Activated T-helper 1 cell treated with anti-CD3 and anti-CD28 coated beads, Interleukin-12 subunit alpha, Interleukin-12 subunit beta, Interleukin-2, Interleukin-4 antibody, amounts not matched to agents 30 ng/mL and 10 ng/mL and 1 ng/mL, durations not matched to agents 14 hours and 24 hours and 36 hours (primary cell): ENCODE measurements at regions of chr6 and their contacts with region 1.

Region 1: DNA sequence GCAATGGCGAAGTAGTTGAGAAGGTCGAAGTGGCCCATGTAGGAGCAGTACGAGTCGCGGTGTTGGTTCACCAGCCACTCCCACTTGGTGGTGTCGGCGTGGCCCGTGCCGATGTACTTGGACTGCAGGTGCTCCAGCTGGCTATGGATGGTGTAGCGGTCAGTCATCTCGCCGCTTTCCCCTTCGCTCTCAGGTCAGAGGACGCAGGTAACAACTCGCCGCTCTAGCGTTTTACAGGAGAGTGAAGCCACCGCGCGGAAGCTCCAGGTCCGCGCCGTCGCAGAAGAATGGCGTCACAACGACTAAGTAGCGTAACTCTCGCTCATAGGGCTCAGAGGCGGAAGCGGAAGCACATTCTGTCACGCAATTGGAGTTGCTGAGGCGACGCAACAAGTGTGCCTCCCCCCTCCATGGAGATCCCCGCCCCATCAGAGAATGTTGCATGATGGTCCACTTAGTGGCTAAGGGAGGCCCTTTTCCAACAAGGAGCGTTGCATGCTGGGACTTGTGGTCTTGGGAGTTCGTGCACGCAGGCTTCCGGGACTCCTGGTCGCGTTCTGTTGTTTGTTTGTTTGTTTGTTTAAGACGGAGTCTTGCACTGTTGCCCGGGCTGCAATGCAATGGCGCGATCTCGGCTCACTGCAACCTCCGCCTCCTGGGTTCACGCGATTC is at the start of gene SF3B5:
- DNase-seq: peak; percentile 96
- H3K4me3 Mint-ChIP-seq: peak within 1 kb of the TSS; percentile 96
- H3K27ac Mint-ChIP-seq: peak within 1 kb of the TSS; percentile 98
- H3K4me1 Mint-ChIP-seq: peaks cover 39% of the 10 kb centered on the region
- H3K27me3 Mint-ChIP-seq: no peaks in the 10 kb centered on the region
- total RNA-seq, gene SF3B5: 204 and 232 TPM in 2 replicates

Region 2: GRCh38 chr6:143575440-143575839 is 520.0 kb before region 1 on chr6:
- intact Hi-C with region 1: loop called (anchors 2 kb)
- DNase-seq: peak; percentile 48
- H3K4me3 Mint-ChIP-seq: no peak overlapping the region
- H3K27ac Mint-ChIP-seq: no peak overlapping the region
- H3K4me1 Mint-ChIP-seq: peaks cover 12% of the 10 kb centered on the region
- H3K27me3 Mint-ChIP-seq: no peaks in the 10 kb centered on the region

Region 3: DNA sequence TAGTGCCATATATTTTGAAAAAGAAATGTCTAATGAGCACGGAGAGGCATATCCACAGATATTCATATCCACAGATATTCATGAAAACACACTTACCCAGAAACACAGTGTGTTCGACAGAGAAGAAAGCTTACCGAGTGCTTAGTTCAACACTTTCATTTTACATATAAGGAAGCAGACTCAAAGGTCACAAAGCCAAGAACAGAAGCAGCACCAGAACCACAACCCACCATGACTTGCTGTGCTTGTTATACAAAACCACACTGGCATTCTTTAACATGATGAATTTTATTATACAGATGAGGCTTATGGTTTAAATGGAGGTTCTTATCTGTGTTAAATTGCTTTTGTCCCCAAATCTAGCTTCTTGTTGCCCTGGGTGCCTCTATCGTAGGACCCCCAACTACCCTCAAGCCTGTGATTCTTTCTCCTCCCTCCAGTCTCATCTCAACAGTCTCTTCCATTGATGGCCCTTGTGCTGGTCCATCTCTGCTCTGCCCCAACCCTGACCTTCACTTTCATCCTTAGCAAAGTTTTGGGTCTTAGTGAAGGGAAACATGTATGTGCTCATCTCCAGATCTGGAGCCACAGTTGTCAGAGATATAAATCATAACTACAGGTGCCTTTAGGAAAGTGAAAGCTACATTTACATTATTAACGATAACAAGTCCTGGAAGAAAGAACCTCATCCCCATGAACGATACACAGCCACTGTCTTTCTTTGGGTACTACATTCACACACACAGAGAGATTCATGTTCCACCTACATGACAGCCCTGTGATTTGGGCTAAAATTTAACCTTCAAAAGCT is 40.1 kb before region 1 on chr6:
- intact Hi-C with region 1: loop called (anchors 1 kb)
- DNase-seq: peak; percentile 37
- H3K4me3 Mint-ChIP-seq: peak overlapping the region; percentile 83
- H3K27ac Mint-ChIP-seq: peak overlapping the region; percentile 98
- H3K4me1 Mint-ChIP-seq: peaks cover 48% of the 10 kb centered on the region
- H3K27me3 Mint-ChIP-seq: no peaks in the 10 kb centered on the region

Region 4: GRCh38 chr6:144131248-144131709 is 35.8 kb after region 1 on chr6:
- intact Hi-C with region 1: loop called (anchors 2 kb)
- DNase-seq: no peak
- H3K4me3 Mint-ChIP-seq: no peak overlapping the region
- H3K27ac Mint-ChIP-seq: peak overlapping the region; percentile 93
- H3K4me1 Mint-ChIP-seq: peaks cover 16% of the 10 kb centered on the region
- H3K27me3 Mint-ChIP-seq: no peaks in the 10 kb centered on the region

Region 5: GRCh38 chr6:144171406-144171805 is 75.9 kb after region 1 on chr6:
- intact Hi-C with region 1: no loop called
- DNase-seq: no peak
- H3K4me3 Mint-ChIP-seq: no peak overlapping the region
- H3K27ac Mint-ChIP-seq: no peak overlapping the region
- H3K4me1 Mint-ChIP-seq: peaks cover 36% of the 10 kb centered on the region
- H3K27me3 Mint-ChIP-seq: no peaks in the 10 kb centered on the region

Region 6: GRCh38 chr6:144195679-144196270 is 100.3 kb after region 1 on chr6:
- intact Hi-C with region 1: no loop called
- DNase-seq: no peak
- H3K4me3 Mint-ChIP-seq: no peak overlapping the region
- H3K27ac Mint-ChIP-seq: no peak overlapping the region
- H3K4me1 Mint-ChIP-seq: no peaks in the 10 kb centered on the region
- H3K27me3 Mint-ChIP-seq: no peaks in the 10 kb centered on the region

Region 7: DNA sequence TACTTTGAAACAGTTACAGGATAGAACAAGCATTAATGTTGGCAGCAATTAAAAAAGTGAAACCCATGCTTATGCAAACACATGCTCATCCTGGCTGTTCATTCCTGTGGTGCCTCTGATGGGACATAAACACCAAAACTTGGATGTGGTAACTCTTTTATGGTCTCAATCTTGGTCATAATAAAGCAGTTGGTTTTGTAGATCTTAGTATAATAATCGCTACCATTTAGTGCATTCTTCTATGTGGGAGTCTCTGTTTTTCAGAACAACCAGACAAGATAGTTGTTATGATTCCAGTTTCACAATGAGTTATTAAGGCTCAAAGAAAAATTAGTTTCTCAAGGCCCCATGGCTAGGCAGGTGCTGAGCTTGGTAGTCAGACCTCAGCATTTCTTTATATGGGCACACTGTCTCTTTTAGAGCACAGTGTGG is 373.7 kb after region 1 on chr6:
- intact Hi-C with region 1: loop called (anchors 5 kb)
- DNase-seq: no peak
- H3K4me3 Mint-ChIP-seq: peak overlapping the region; percentile 54
- H3K27ac Mint-ChIP-seq: peak overlapping the region; percentile 86
- H3K4me1 Mint-ChIP-seq: peaks cover 27% of the 10 kb centered on the region
- H3K27me3 Mint-ChIP-seq: no peaks in the 10 kb centered on the region